Endothelial cell of umbilical vein (primary cell): ENCODE measurements at regions of chr5 and their contacts with region 1.

Region 1: GRCh38 chr5:93582677-93583438 is at the start of gene NR2F1:
- DNase-seq: peak; percentile 99
- H3K4me3 ChIP-seq: peak within 1 kb of the TSS; percentile 76 to 93 (median 85)
- H3K27ac ChIP-seq: peak within 1 kb of the TSS; percentile 86
- H3K4me1 ChIP-seq: peaks cover 25% of the 10 kb centered on the region
- H3K27me3 ChIP-seq: no peaks in the 10 kb centered on the region
- CTCF ChIP-seq: no peak
- POLR2A ChIP-seq: peak; percentile 89
- total RNA-seq, gene NR2F1: 21.5 and 23.9 TPM in 2 replicates

Region 2: GRCh38 chr5:92909602-92909962 is 673.3 kb before region 1 on chr5:
- CTCF ChIA-PET with region 1: interaction called, 13 read pairs
- POLR2A ChIA-PET with region 1: interaction called, 5 read pairs
- dilution Hi-C with region 1: no loop called
- intact Hi-C with region 1: loop called (anchors 1 kb)
- DNase-seq: peak; percentile 53
- H3K4me3 ChIP-seq: no peak overlapping the region
- H3K27ac ChIP-seq: no peak overlapping the region
- H3K4me1 ChIP-seq: peaks cover 16% of the 10 kb centered on the region
- H3K27me3 ChIP-seq: no peaks in the 10 kb centered on the region
- CTCF ChIP-seq: peak; percentile 68 to 74
- POLR2A ChIP-seq: no peak

Region 3: DNA sequence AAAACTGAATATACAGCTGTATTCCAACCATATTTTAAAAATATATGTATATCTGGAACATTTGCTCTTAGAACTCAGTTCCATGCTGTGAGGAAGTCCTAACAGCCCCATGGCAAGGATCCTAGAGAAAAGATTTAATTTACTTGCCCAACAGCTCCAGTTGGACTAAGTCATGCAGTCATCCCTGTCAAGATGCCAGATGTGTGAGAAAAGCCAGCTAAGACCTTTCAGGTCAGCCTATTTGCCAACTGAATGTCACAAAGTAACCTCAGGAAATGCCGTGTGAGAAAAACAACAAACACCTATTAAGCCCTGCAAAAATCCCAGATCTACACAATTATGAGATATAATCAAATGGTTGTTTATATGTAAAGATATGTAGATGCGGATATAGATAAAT is 418.2 kb before region 1 on chr5:
- CTCF ChIA-PET with region 1: no interaction called
- POLR2A ChIA-PET with region 1: interaction called, 11 read pairs
- dilution Hi-C with region 1: no loop called
- intact Hi-C with region 1: loop called (anchors 1 kb)
- DNase-seq: peak; percentile 80
- H3K4me3 ChIP-seq: no peak overlapping the region
- H3K27ac ChIP-seq: peak overlapping the region; percentile 100
- H3K4me1 ChIP-seq: peaks cover 45% of the 10 kb centered on the region
- H3K27me3 ChIP-seq: no peaks in the 10 kb centered on the region
- CTCF ChIP-seq: no peak
- POLR2A ChIP-seq: no peak

Region 4: DNA sequence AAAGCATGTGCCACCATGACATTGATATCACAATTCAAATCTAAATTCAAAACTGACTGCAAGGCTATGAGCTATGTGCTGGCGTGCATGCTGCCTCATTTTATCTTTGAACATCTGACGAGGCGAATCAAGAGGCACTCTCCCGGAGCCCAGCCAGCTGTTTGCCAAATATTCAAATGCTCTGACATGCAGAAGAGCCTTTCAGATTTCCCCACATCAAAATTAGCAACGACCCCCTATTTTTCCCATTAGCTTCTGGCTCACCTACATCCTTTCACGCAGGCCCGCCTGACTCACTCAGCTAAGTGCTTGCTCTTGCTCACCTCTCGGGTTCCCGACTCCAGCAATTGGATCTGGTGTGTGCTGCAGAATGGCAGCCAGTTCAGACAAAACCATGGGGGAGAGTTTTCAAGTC is 160.9 kb before region 1 on chr5:
- CTCF ChIA-PET with region 1: no interaction called
- POLR2A ChIA-PET with region 1: no interaction called
- dilution Hi-C with region 1: no loop called
- intact Hi-C with region 1: loop called (anchors 5 kb)
- DNase-seq: peak; percentile 12
- H3K4me3 ChIP-seq: no peak overlapping the region
- H3K27ac ChIP-seq: no peak overlapping the region
- H3K4me1 ChIP-seq: peaks cover 16% of the 10 kb centered on the region
- H3K27me3 ChIP-seq: no peaks in the 10 kb centered on the region
- CTCF ChIP-seq: no peak
- POLR2A ChIP-seq: no peak

Region 5: GRCh38 chr5:93545872-93546271 is 37.0 kb before region 1 on chr5:
- CTCF ChIA-PET with region 1: no interaction called
- POLR2A ChIA-PET with region 1: no interaction called
- dilution Hi-C with region 1: no loop called
- intact Hi-C with region 1: no loop called
- DNase-seq: no peak
- H3K4me3 ChIP-seq: no peak overlapping the region
- H3K27ac ChIP-seq: no peak overlapping the region
- H3K4me1 ChIP-seq: no peaks in the 10 kb centered on the region
- H3K27me3 ChIP-seq: no peaks in the 10 kb centered on the region
- CTCF ChIP-seq: no peak
- POLR2A ChIP-seq: no peak

Region 6: DNA sequence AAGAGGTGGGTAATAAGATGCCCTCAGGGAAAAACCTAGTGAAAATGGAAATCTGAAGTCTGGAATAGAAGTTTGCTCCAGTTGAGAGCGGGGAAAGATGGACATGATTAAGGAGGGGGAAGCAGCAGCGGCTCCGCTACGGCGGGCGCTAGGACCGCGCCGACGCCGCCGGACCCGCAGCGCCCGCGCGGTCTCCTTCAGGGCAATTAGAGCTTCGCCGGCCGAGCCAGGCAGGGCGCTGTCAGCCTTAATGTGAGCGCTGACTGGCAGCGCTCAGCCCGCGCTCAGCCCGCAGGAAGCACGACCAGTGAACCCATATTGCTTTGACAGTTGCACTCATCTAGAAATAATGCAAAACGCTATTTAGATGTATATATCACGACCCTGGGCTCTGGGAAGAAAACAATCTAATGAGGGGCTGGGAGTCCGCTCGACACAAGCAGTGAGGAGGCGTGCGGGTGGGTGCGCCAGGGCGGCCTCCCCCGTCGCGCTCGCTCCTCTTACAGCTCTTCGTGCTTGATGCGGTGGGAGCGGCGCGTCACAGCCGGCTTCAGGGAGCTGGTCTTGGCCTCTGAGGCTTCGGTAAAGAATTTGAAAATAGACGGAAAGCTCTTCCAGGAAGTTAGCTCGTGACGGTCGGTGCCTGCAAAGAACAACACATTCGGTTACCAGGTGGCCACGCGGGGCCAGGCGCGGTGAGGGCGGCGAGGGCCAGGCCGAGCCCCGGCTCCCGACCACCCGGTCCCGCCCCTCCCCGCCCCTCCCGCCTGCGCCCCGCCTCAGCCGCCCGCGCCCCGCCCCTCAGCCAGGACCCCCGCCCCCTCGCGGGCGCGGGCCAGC is 37.8 kb after region 1 on chr5:
- CTCF ChIA-PET with region 1: interaction called, 7 read pairs
- POLR2A ChIA-PET with region 1: interaction called, 9 read pairs
- dilution Hi-C with region 1: no loop called
- intact Hi-C with region 1: loop called (anchors 1 kb)
- DNase-seq: peak; percentile 69
- H3K4me3 ChIP-seq: peak overlapping the region; percentile 51 to 67 (median 64)
- H3K27ac ChIP-seq: peak overlapping the region; percentile 39
- H3K4me1 ChIP-seq: peaks cover 7% of the 10 kb centered on the region
- H3K27me3 ChIP-seq: peaks cover 0 to 2% of the 10 kb centered on the region in 2 experiments
- CTCF ChIP-seq: peak in 1 of 2 donors; percentile 28
- POLR2A ChIP-seq: no peak

Region 7: GRCh38 chr5:94021246-94021645 is 438.4 kb after region 1 on chr5:
- CTCF ChIA-PET with region 1: no interaction called
- POLR2A ChIA-PET with region 1: no interaction called
- dilution Hi-C with region 1: no loop called
- intact Hi-C with region 1: loop called (anchors 10 kb)
- DNase-seq: peak; percentile 84
- H3K4me3 ChIP-seq: no peak overlapping the region
- H3K27ac ChIP-seq: no peak overlapping the region
- H3K4me1 ChIP-seq: peaks cover 8% of the 10 kb centered on the region
- H3K27me3 ChIP-seq: no peaks in the 10 kb centered on the region
- CTCF ChIP-seq: no peak
- POLR2A ChIP-seq: no peak

Region 8: DNA sequence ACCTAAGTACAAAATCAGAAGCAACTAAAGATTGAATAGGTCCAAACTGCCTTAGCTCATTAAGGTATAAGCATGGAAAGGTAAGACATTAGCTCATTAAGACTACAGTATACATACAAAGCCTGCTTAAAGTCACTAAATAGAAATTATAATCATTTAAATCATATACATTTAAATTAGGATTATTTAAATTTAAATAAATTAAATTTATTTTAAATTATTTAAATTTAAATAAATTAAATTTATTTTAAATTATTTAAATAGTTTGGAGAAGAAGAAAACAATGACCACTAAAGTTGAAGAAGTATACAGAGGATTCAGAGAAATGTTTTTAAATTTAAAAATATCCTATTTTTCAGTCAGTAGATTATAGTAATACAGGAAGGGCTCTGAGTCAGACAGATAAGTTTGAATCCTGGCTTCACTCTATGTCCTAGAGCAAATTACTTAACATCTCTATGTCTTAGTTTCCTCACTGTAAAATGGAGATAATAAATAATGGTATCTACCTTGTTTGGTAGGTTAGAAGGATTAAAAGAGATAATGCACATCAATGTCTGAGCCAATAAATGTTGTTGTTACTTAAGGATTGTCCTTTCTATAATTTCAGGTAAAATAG is 934.7 kb after region 1 on chr5:
- CTCF ChIA-PET with region 1: no interaction called
- POLR2A ChIA-PET with region 1: no interaction called
- dilution Hi-C with region 1: no loop called
- intact Hi-C with region 1: no loop called
- DNase-seq: no peak
- H3K4me3 ChIP-seq: no peak overlapping the region
- H3K27ac ChIP-seq: no peak overlapping the region
- H3K4me1 ChIP-seq: no peaks in the 10 kb centered on the region
- H3K27me3 ChIP-seq: no peaks in the 10 kb centered on the region
- CTCF ChIP-seq: no peak
- POLR2A ChIP-seq: no peak